ENCODE measurements at regions of chr20 and their contacts with region 1.

Region 1: GRCh38 chr20:32858189-32858588 is 534 bp upstream of the EFCAB8 start:
- DNase-seq: no peak
- H3K4me3 Mint-ChIP-seq: no peak overlapping the region
- H3K27ac Mint-ChIP-seq: peak overlapping the region; percentile 9
- H3K4me1 Mint-ChIP-seq: peaks cover 18% of the 10 kb centered on the region
- H3K27me3 Mint-ChIP-seq: no peaks in the 10 kb centered on the region

Region 2: DNA sequence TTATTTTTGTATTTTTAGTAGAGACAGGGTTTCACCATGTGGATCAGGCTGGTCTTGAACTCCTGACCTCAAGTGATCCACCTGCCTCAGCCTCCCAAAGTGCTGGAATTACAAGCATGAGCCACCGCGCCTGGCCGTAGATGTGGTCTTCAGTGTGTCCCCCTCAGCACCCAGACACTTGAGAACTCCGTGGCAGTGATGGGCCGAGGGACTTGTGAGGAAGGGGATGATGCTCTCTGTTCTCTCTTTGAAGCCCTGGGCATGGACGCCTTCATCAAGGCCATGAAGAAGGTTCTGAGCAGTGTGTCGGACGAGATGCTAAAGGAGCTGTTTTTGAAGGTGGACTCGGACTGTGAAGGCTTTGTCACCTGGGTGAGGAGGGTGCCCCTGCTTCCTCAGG is 17.5 kb after region 1 on chr20:
- intact Hi-C with region 1: loop called (anchors 2 kb)
- DNase-seq: no peak
- H3K4me3 Mint-ChIP-seq: no peak overlapping the region
- H3K27ac Mint-ChIP-seq: no peak overlapping the region
- H3K4me1 Mint-ChIP-seq: no peaks in the 10 kb centered on the region
- H3K27me3 Mint-ChIP-seq: no peaks in the 10 kb centered on the region

Measured in activated T-helper 2 cell treated with anti-CD3 and anti-CD28 coated beads, Interferon-gamma antibody, Interleukin-2, Interleukin-4, amounts not matched to agents 10 μg/mL and 5 μg/mL and 100 μg/mL, durations not matched to agents 14 hours and 24 hours and 36 hours (primary cell).